ENCODE measurements at regions of chr18 and their contacts with region 1.

Region 1: DNA sequence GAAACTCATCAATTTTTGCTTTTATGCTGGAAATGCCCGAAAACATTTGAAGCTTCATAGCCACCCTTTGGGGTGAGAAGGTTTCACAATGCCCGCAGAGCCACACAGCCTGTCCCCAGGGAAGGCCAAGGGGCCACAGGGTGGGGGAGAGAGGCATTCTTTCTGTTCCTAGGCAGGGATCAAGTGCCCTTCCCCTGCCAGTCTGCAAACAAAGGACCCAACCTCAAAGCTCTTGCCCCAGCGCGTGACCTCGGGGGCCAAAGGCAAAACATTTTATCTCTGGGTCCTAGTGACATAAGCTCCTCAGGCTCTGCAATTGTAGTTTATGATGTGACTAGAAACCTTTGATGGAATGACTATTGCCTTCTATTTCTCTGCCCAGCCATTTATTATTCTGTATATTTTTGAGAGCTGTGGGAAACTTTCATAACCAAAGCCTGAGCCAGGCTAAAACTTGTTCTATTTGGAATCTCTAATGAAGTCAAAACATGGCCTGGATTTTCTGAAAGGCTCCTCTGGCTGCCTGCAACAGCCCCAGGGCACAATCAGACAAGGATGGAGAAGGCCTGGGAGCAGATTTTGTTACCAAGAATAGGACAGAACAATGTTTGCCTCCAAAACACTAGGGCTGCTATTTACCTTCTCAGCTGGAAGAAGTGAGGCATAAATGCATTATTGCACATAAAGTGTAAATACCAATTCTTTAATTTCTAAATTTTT is 137.2 kb upstream of the KCTD1 start:
- DNase-seq: no peak
- H3K4me3 ChIP-seq: no peak overlapping the region
- H3K4me3 Mint-ChIP-seq: no peak overlapping the region
- H3K27ac Mint-ChIP-seq: no peak overlapping the region
- H3K4me1 ChIP-seq: no peaks in the 10 kb centered on the region
- H3K4me1 Mint-ChIP-seq: no peaks in the 10 kb centered on the region
- H3K27me3 ChIP-seq: no peaks in the 10 kb centered on the region
- H3K27me3 Mint-ChIP-seq: peaks cover 3% of the 10 kb centered on the region
- CTCF ChIP-seq: no peak

Region 2: GRCh38 chr18:26734760-26735159 is 49.2 kb after region 1 on chr18:
- CTCF ChIA-PET with region 1: no interaction called
- POLR2A ChIA-PET with region 1: no interaction called
- intact Hi-C with region 1: loop called (anchors 1 kb)
- DNase-seq: no peak
- H3K4me3 ChIP-seq: no peak overlapping the region
- H3K4me3 Mint-ChIP-seq: no peak overlapping the region
- H3K27ac Mint-ChIP-seq: no peak overlapping the region
- H3K4me1 ChIP-seq: no peaks in the 10 kb centered on the region
- H3K4me1 Mint-ChIP-seq: no peaks in the 10 kb centered on the region
- H3K27me3 ChIP-seq: no peaks in the 10 kb centered on the region
- H3K27me3 Mint-ChIP-seq: peaks cover 3% of the 10 kb centered on the region
- CTCF ChIP-seq: no peak